GM18951 (cell line): ENCODE measurements at regions of chr16 and their contacts with region 1.

Region 1: DNA sequence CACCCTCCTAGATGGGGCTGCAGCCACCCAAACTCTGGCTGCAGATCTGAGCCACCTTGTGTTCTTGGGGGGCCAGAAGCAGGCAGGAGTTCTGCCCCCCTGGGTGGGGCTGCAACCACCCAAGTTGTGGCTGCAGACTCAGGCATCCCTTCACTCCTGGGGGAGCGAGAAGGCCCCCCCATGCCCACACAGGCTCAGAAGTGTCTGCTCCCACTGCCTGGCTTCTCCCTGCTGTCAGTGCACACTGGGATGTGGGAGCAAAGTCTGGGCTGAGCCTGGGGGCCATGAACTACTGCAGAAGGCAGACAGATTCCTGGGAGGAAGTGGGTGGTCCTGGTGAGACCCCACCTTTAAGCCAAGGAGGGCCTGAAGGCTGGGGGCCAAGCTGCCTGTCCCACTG is 13.0 kb downstream of the MT1X start:
- POLR2A ChIP-seq: no peak

Region 2: DNA sequence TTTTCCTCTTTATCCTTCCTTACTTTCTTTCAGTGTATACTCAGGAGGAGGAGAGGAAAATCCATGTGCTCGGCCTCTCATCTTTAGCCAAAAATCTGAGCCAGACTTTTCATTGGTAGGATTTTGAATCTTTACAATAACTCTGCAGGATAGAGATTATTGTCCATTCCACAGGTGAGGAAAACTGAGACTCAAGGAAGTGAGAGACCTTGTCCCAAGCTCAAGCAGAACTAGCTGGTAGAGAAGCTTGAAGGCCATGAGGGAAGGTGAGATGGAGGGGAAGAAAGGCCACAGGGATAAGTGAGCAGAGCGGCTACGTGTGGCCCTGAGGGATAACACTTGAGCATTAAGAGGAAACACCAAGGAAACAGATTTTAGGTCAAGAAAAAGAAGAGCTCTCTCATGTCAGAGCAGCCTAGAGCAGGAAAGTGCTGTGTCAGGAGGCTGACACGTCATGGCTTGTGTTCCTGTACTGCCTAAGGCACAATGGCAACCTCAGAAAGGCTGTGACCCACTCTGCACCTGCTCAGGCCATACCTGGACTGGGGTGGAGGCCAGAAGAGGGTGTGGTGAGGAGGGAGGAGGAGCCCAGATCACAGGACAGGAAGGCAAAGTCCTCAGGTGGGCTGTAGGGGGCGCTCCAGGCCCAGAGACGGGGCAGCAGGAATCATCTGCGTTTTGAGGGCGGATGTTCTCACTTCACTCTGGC is 118.5 kb before region 1 on chr16:
- in situ Hi-C with region 1: loop called (anchors 5 kb)
- POLR2A ChIP-seq: no peak

Region 3: DNA sequence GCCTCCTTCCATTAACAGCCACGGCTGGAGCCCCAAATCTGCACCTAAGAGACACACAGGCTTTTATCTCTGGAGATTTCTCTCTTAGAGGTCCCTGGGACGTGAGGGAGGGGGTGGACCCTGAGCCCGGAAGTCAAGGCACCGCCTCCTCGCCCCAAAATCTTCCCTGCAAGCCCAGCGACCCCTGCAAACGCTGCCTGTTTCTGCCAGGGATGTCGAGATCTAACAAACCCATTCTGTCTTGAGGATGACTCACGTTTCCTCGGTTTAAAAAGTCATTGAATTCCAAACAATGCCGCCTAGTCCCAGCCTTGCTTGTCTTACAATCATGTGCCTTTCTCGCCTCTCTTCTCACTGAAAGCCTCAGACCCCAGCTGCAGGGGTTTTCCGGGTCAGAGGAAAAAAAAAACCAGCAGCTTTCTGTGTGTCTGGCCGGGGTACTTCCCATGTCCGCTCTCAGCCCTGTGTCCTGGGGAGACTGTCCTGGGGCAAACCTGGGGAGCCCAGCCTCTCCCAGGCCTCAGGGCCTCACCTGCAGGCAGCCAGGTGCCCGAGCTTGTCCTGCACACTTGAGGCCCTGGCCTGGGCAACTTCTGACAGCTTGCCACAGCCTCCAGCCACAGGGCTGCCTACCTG is 565.2 kb after region 1 on chr16:
- in situ Hi-C with region 1: no loop called
- POLR2A ChIP-seq: peak; percentile 19